Activated B cell treated with CpG ODN at 0.5 μM for 24 hours (primary cell): ENCODE measurements at regions of chr7 and their contacts with region 1.

Region 1: GRCh38 chr7:45111298-45112223 is at the start of gene TBRG4:
- DNase-seq: peak; percentile 94
- ATAC-seq: peak; percentile 93
- H3K4me3 Mint-ChIP-seq: peak within 1 kb of the TSS; percentile 98
- H3K27ac Mint-ChIP-seq: peak within 1 kb of the TSS; percentile 97
- H3K4me1 Mint-ChIP-seq: peaks cover 44% of the 10 kb centered on the region
- H3K27me3 Mint-ChIP-seq: peaks cover 4% of the 10 kb centered on the region
- CTCF ChIP-seq: no peak
- total RNA-seq, gene TBRG4: 109 and 128 TPM in 2 replicates

Region 2: DNA sequence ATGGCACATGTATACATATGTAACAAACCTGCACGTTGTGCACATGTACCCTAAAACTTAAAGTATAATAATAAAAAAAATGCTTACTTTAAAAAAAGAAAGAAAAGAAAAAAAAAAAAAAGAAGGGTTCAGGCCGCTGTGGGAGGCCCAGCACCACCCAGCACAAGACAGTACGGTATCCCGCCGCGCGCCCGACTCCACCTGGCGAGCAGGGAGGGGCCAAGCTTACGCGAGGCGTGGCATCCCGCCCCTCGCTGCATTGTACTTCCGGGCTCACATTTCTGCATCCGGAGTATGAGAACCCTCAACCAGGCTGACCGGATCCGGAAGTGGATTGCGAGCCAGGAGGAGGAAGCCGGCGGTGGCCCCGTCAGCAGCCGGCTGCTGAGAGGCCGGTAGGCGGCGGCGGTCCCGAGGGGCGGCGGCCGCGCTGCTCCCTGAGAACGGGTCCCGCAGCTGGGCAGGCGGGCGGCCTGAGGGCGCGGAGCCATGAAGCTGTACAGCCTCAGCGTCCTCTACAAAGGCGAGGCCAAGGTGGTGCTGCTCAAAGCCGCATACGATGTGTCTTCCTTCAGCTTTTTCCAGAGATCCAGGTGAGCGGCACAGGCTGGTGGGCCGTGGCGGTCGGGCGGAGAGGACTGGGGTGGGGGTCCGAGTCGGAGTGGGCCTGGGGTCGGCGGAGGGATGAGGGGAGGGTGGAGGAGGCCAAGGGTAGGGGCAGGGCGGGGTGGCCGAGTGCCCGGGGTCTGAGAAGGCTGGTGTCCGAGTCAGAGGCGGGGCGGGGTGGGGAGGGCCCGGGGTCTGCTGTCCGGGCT is 910.7 kb before region 1 on chr7 and contains the start of gene YKT6:
- CTCF ChIA-PET with region 1: no interaction called
- POLR2A ChIA-PET with region 1: no interaction called
- intact Hi-C with region 1: loop called (anchors 1 kb)
- DNase-seq: peak; percentile 87
- ATAC-seq: peak; percentile 97
- H3K4me3 Mint-ChIP-seq: peak within 1 kb of the TSS; percentile 87
- H3K27ac Mint-ChIP-seq: peak within 1 kb of the TSS; percentile 12
- H3K4me1 Mint-ChIP-seq: peaks cover 27% of the 10 kb centered on the region
- H3K27me3 Mint-ChIP-seq: peaks cover 6% of the 10 kb centered on the region
- CTCF ChIP-seq: no peak
- total RNA-seq, gene YKT6: 78.2 and 78.7 TPM in 2 replicates

Region 3: GRCh38 chr7:44748045-44748947 is 363.3 kb before region 1 on chr7 and contains the start of gene ZMIZ2:
- CTCF ChIA-PET with region 1: no interaction called
- POLR2A ChIA-PET with region 1: interaction called, 6 read pairs
- intact Hi-C with region 1: loop called (anchors 1 kb)
- DNase-seq: peak; percentile 97
- ATAC-seq: peak; percentile 78
- H3K4me3 Mint-ChIP-seq: peak within 1 kb of the TSS; percentile 91
- H3K27ac Mint-ChIP-seq: peak within 1 kb of the TSS; percentile 95
- H3K4me1 Mint-ChIP-seq: peaks cover 48% of the 10 kb centered on the region
- H3K27me3 Mint-ChIP-seq: no peaks in the 10 kb centered on the region
- CTCF ChIP-seq: no peak
- total RNA-seq, gene ZMIZ2: 378 and 440 TPM in 2 replicates

Region 4: DNA sequence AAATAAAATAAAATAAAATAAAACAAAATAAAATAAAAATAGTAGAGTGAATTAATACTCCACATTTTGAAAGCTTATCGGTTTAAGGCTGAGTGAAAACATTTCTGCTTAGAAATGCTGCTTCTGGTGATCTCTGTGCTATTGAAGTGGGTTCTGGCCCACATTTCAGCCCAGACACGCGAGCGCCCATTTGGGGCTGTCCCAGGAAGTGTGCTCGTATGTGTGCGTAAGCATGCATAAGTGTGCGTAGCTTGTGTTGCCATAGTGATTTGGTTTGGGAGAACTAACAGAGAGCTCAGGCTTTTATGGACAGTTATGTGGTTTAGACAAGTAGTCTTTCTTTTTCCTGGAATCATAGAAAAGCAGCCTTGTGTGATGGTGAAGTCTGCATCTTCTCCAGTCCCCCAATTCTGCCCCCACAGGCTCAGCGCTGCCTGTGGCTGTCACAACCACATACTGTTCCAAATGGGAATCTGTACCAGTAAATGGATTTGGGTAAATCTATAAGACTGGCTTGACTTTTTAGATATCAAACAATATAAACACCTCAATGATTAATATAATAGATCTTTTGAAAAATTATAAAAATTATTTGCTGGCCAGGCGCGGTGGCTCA is 196.5 kb before region 1 on chr7:
- CTCF ChIA-PET with region 1: no interaction called
- POLR2A ChIA-PET with region 1: no interaction called
- intact Hi-C with region 1: loop called (anchors 1 kb)
- DNase-seq: peak; percentile 53
- ATAC-seq: peak; percentile 95
- H3K4me3 Mint-ChIP-seq: peak overlapping the region; percentile 41
- H3K27ac Mint-ChIP-seq: peak overlapping the region; percentile 78
- H3K4me1 Mint-ChIP-seq: peaks cover 11% of the 10 kb centered on the region
- H3K27me3 Mint-ChIP-seq: no peaks in the 10 kb centered on the region
- CTCF ChIP-seq: no peak

Region 5: GRCh38 chr7:44986218-44987053 is 125.1 kb before region 1 on chr7:
- CTCF ChIA-PET with region 1: no interaction called
- POLR2A ChIA-PET with region 1: interaction called, 13 read pairs
- intact Hi-C with region 1: no loop called
- DNase-seq: peak; percentile 97
- ATAC-seq: peak; percentile 92
- H3K4me3 Mint-ChIP-seq: peak overlapping the region; percentile 98
- H3K27ac Mint-ChIP-seq: peak overlapping the region; percentile 98
- H3K4me1 Mint-ChIP-seq: peaks cover 58% of the 10 kb centered on the region
- H3K27me3 Mint-ChIP-seq: no peaks in the 10 kb centered on the region
- CTCF ChIP-seq: no peak

Region 6: DNA sequence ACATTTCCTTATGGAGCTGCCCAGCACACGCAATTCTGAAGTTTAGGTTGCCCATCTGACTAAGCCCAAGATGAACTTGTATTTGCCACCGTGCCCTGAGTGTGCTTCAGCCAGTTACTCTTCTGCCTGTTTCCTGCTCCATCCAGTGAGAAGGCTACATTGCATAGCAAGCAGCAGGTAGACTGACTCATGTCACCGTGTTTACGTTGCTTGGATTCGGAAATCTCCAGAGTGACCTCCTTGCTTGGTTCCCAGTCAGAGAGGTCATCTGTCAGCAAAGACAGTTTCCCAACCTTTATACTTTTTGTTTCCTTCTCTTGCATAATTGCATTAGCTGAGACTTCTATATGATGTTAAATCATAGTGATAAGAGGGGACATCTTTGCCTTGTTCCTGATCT is 53.7 kb before region 1 on chr7:
- CTCF ChIA-PET with region 1: no interaction called
- POLR2A ChIA-PET with region 1: interaction called, 7 read pairs
- intact Hi-C with region 1: loop called (anchors 5 kb)
- DNase-seq: no peak
- ATAC-seq: no peak
- H3K4me3 Mint-ChIP-seq: no peak overlapping the region
- H3K27ac Mint-ChIP-seq: no peak overlapping the region
- H3K4me1 Mint-ChIP-seq: peaks cover 63% of the 10 kb centered on the region
- H3K27me3 Mint-ChIP-seq: no peaks in the 10 kb centered on the region
- CTCF ChIP-seq: no peak